GM10248 (cell line): ENCODE measurements at regions of chr11 and their contacts with region 1.

Region 1: DNA sequence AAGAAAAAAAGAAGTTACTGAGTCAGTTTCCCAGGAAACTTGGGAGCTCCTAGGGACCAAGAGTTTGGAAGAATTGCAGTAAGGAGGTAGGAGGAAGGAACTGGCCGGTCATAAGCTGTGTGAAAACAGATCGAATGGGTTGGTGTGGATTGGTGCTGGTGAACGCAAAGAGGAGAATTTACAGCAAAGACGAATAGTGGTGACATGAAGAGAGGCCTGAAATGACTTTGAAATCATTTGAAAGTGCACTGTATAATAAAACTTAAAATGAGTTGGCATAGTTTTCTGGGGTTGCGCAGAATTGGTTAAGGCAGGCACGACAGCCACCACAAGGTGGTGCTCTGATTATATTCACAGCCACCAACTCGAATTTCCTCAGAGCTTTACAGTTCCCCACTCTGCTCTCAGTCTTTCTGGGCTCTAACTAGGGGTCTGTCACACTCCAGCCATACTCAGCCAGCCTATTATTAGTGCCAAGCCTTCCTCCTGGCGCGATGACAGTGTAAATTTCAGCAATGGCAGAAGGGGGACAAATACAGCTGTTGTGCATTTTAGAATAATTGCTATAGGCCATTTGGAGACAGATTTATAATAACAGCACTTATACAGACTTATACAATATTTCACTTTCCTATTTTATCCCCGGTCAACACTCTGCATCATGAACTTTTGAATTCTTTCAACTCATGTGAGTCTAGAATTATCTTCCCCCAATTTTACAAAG is 8.3 kb upstream of the HTR3B start:
- DNase-seq: peak; percentile 54
- CTCF ChIP-seq: peak; percentile 80

Region 2: DNA sequence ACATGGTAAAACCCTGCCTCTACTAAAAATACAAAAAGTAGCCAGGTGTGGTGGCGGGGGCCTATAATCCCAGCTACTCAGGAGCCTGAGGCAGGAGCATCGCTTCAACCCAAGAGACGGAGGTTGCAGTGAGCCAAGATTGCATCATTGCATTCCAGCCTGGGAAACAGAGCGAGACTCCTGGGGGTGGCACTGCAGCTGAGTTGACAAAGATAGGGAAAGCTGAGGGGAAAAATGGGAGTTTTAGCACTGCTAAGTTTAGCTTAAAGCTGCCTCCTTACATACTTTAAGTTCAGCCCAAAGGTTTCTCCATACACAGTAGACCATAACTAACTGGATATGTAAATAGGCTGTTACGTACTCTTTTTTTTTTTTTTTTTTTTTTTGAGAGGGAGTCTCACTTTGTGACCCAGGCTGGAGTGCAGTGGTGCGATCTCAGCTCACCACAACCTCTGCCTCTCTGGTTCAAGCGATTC is 11.9 kb before region 1 on chr11:
- CTCF ChIA-PET with region 1: interaction called, 36 read pairs
- POLR2A ChIA-PET with region 1: no interaction called
- DNase-seq: no peak
- CTCF ChIP-seq: no peak

Region 3: GRCh38 chr11:113923572-113923971 is 27.3 kb after region 1 on chr11:
- CTCF ChIA-PET with region 1: no interaction called
- POLR2A ChIA-PET with region 1: no interaction called
- DNase-seq: no peak
- CTCF ChIP-seq: no peak